ENCODE measurements at regions of chr3 and their contacts with region 1.

Region 1: GRCh38 chr3:171459942-171460724 is at the start of gene TNIK:
- DNase-seq: peak; percentile 91 to 96 (median 93)
- H3K4me3 ChIP-seq: peak within 1 kb of the TSS; percentile 75
- H3K4me3 Mint-ChIP-seq: peak within 1 kb of the TSS; percentile 92 to 99 (median 94)
- H3K27ac ChIP-seq: peak within 1 kb of the TSS; percentile 74
- H3K27ac Mint-ChIP-seq: peak within 1 kb of the TSS; percentile 92 to 97 (median 96)
- H3K4me1 ChIP-seq: peaks cover 42% of the 10 kb centered on the region
- H3K4me1 Mint-ChIP-seq: peaks cover 24 to 51% (median 46%) of the 10 kb centered on the region in 3 donors
- H3K27me3 ChIP-seq: no peaks in the 10 kb centered on the region
- H3K27me3 Mint-ChIP-seq: peaks cover 0 to 2% of the 10 kb centered on the region in 2 donors
- total RNA-seq, gene TNIK: 15.9 to 19.2 TPM

Region 2: GRCh38 chr3:171125010-171125409 is 335.1 kb before region 1 on chr3:
- CTCF ChIA-PET with region 1: no interaction called
- POLR2A ChIA-PET with region 1: no interaction called
- DNase-seq: no peak
- H3K4me3 ChIP-seq: no peak overlapping the region
- H3K4me3 Mint-ChIP-seq: no peak overlapping the region
- H3K27ac ChIP-seq: no peak overlapping the region
- H3K27ac Mint-ChIP-seq: no peak overlapping the region
- H3K4me1 ChIP-seq: no peaks in the 10 kb centered on the region
- H3K4me1 Mint-ChIP-seq: peaks cover 0 to 2% (median 0%) of the 10 kb centered on the region in 3 donors
- H3K27me3 ChIP-seq: no peaks in the 10 kb centered on the region
- H3K27me3 Mint-ChIP-seq: no peaks in the 10 kb centered on the region

Region 3: GRCh38 chr3:171480526-171480925 is 20.4 kb after region 1 on chr3:
- CTCF ChIA-PET with region 1: interaction called, 10 read pairs
- POLR2A ChIA-PET with region 1: interaction called, 5 read pairs
- DNase-seq: peak in 2 of 5 donors; percentile 10 to 37
- H3K4me3 ChIP-seq: no peak overlapping the region
- H3K4me3 Mint-ChIP-seq: peak overlapping the region; percentile 23 to 76 (median 62)
- H3K27ac ChIP-seq: no peak overlapping the region
- H3K27ac Mint-ChIP-seq: peak overlapping the region; percentile 39 to 95 (median 68)
- H3K4me1 ChIP-seq: peaks cover 14% of the 10 kb centered on the region
- H3K4me1 Mint-ChIP-seq: peaks cover 10 to 18% (median 17%) of the 10 kb centered on the region in 3 donors
- H3K27me3 ChIP-seq: no peaks in the 10 kb centered on the region
- H3K27me3 Mint-ChIP-seq: no peaks in the 10 kb centered on the region

Region 4: GRCh38 chr3:171491361-171491760 is 31.2 kb after region 1 on chr3:
- CTCF ChIA-PET with region 1: interaction called, 21 read pairs
- POLR2A ChIA-PET with region 1: interaction called, 38 read pairs
- DNase-seq: peak in 2 of 5 donors; percentile 22 to 43
- H3K4me3 ChIP-seq: peak overlapping the region; percentile 29
- H3K4me3 Mint-ChIP-seq: peak overlapping the region; percentile 54 to 78 (median 74)
- H3K27ac ChIP-seq: no peak overlapping the region
- H3K27ac Mint-ChIP-seq: peak overlapping the region; percentile 22 to 91 (median 78)
- H3K4me1 ChIP-seq: peaks cover 48% of the 10 kb centered on the region
- H3K4me1 Mint-ChIP-seq: peaks cover 42 to 56% (median 44%) of the 10 kb centered on the region in 3 donors
- H3K27me3 ChIP-seq: no peaks in the 10 kb centered on the region
- H3K27me3 Mint-ChIP-seq: no peaks in the 10 kb centered on the region